CD4-positive, alpha-beta T cell (primary cell): ENCODE measurements at regions of chr6 and their contacts with region 1.

Region 1: GRCh38 chr6:138765896-138766655 is 7.5 kb upstream of the CCDC28A start:
- DNase-seq: peak in 4 of 14 experiments; percentile 4 to 54 (median 52)
- ATAC-seq: peak; percentile 41
- H3K4me3 ChIP-seq: no peak overlapping the region
- H3K4me3 Mint-ChIP-seq: no peak overlapping the region
- H3K27ac ChIP-seq: no peak overlapping the region
- H3K27ac Mint-ChIP-seq: no peak overlapping the region
- H3K4me1 ChIP-seq: no peaks in the 10 kb centered on the region
- H3K4me1 Mint-ChIP-seq: no peaks in the 10 kb centered on the region
- H3K27me3 ChIP-seq: no peaks in the 10 kb centered on the region
- H3K27me3 Mint-ChIP-seq: no peaks in the 10 kb centered on the region
- CTCF ChIP-seq: peak; percentile 89

Region 2: DNA sequence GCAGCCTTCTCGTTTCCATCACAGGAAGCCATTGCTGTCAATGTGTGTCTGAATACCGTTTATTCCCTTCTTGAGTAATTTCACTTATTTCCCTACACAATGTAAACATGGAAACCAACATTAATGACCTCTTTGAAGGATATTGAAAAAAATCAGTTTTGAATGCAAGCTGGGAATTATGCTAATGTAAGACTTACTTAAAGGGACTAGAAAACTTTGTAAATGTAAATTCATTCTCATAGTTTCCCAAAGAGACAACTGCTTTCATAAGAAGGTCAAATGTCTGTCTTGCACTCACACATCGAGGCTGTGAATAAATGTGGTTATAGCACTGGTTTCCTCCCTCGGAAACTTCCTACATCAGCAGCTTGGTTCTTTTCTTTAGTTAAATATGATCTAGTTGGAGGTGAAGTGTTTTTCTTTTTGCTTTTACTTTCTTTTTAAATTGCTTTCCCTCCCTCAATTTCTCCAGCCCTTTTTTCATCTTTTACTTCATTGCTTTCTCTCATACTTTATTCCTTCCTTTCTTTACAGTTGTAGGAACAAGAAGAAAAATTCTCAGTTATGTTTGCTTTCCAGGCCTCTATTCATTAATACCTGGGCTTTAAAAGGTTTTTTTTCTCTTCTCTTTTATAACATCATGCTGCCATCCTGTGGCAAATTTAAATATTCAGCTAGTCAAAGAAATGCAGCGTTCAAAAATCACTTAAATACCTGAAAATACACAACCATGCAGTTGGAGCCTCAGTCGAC is 790.7 kb before region 1 on chr6:
- CTCF ChIA-PET with region 1: no interaction called
- POLR2A ChIA-PET with region 1: no interaction called
- intact Hi-C with region 1: no loop called
- DNase-seq: peak in 5 of 14 experiments; percentile 17 to 85 (median 72)
- ATAC-seq: peak; percentile 81
- H3K4me3 ChIP-seq: peak overlapping the region; percentile 19
- H3K4me3 Mint-ChIP-seq: peak overlapping the region; percentile 82
- H3K27ac ChIP-seq: peak overlapping the region; percentile 64 to 72
- H3K27ac Mint-ChIP-seq: peak overlapping the region; percentile 84
- H3K4me1 ChIP-seq: peaks cover 37% of the 10 kb centered on the region
- H3K4me1 Mint-ChIP-seq: peaks cover 29% of the 10 kb centered on the region
- H3K27me3 ChIP-seq: no peaks in the 10 kb centered on the region
- H3K27me3 Mint-ChIP-seq: no peaks in the 10 kb centered on the region
- CTCF ChIP-seq: peak; percentile 60

Region 3: GRCh38 chr6:138588805-138589434 is 177.2 kb before region 1 on chr6:
- CTCF ChIA-PET with region 1: interaction called, 4 read pairs
- POLR2A ChIA-PET with region 1: no interaction called
- intact Hi-C with region 1: loop called (anchors 1 kb)
- DNase-seq: peak; percentile 9 to 80 (median 28)
- ATAC-seq: peak; percentile 39
- H3K4me3 ChIP-seq: no peak overlapping the region
- H3K4me3 Mint-ChIP-seq: no peak overlapping the region
- H3K27ac ChIP-seq: no peak overlapping the region
- H3K27ac Mint-ChIP-seq: no peak overlapping the region
- H3K4me1 ChIP-seq: peaks cover 6% of the 10 kb centered on the region
- H3K4me1 Mint-ChIP-seq: peaks cover 20% of the 10 kb centered on the region
- H3K27me3 ChIP-seq: no peaks in the 10 kb centered on the region
- H3K27me3 Mint-ChIP-seq: no peaks in the 10 kb centered on the region
- CTCF ChIP-seq: peak; percentile 96

Region 4: GRCh38 chr6:138692058-138692977 is 73.8 kb before region 1 on chr6:
- CTCF ChIA-PET with region 1: no interaction called
- POLR2A ChIA-PET with region 1: no interaction called
- intact Hi-C with region 1: loop called (anchors 1 kb)
- DNase-seq: peak in 11 of 14 experiments; percentile 10 to 61 (median 43)
- ATAC-seq: peak; percentile 64
- H3K4me3 ChIP-seq: no peak overlapping the region
- H3K4me3 Mint-ChIP-seq: peak overlapping the region; percentile 88
- H3K27ac ChIP-seq: no peak overlapping the region
- H3K27ac Mint-ChIP-seq: no peak overlapping the region
- H3K4me1 ChIP-seq: peaks cover 10% of the 10 kb centered on the region
- H3K4me1 Mint-ChIP-seq: peaks cover 7% of the 10 kb centered on the region
- H3K27me3 ChIP-seq: peaks cover 10 to 17% of the 10 kb centered on the region in 2 experiments
- H3K27me3 Mint-ChIP-seq: peaks cover 49% of the 10 kb centered on the region
- CTCF ChIP-seq: peak; percentile 73